Psoas muscle (tissue), 8 donors: ENCODE measurements at regions of chr12 and their contacts with region 1.

Region 1: GRCh38 chr12:39319187-39319586 is 123.7 kb downstream of the KIF21A start:
- DNase-seq: no peak
- ATAC-seq: no peak
- H3K4me3 ChIP-seq: no peak overlapping the region
- H3K27ac ChIP-seq: no peak overlapping the region
- H3K4me1 ChIP-seq: no peaks in the 10 kb centered on the region
- H3K27me3 ChIP-seq: no peaks in the 10 kb centered on the region
- CTCF ChIP-seq: no peak

Region 2: DNA sequence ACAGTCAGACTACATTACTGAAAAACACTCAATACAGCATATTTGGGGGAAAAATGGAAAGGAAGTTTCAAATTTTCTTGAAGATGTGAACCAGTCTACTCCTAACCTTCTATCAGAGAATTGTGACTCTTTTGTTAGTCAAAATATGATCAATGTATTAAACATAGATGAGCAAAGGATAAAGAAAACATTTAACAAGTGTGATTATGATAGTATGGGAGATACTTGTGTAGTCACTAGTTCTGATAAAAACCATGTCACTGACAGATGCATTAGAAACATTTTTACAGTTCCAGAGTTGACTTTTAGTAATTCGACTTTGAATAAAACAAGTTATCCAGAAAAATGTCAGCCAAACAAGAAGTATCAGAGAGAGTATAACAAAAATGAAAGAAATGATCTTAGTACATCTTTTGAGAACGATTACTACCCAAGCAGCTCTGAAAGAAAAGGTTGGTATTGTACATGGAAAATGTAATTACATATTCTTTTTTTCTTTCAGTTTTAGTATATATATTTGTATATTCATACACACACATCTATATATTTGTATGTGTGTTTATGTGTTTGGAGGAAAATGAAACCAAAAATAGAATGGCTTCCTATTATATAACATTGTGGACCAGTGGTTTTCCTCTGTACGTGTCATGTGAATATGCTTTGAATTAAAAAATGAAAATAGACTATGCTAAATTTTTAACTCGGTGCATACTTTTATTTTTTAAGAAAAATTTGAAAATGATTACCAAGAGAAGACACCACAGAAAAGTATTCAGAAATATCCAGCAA is 363.7 kb after region 1 on chr12:
- intact Hi-C with region 1: loop called in 1 of 2 experiments (anchors 10 kb)
- DNase-seq: no peak
- ATAC-seq: no peak
- H3K4me3 ChIP-seq: no peak overlapping the region
- H3K27ac ChIP-seq: no peak overlapping the region
- H3K4me1 ChIP-seq: no peaks in the 10 kb centered on the region
- H3K27me3 ChIP-seq: no peaks in the 10 kb centered on the region
- CTCF ChIP-seq: no peak